ENCODE measurements at regions of chr7 and their contacts with region 1.

Region 1: GRCh38 chr7:12695965-12696364 is 8.5 kb downstream of the ARL4A start:
- DNase-seq: peak; percentile 68
- H3K4me3 Mint-ChIP-seq: no peak overlapping the region
- H3K27ac Mint-ChIP-seq: peak overlapping the region; percentile 79
- H3K4me1 Mint-ChIP-seq: peaks cover 27% of the 10 kb centered on the region
- H3K27me3 Mint-ChIP-seq: no peaks in the 10 kb centered on the region
- CTCF ChIP-seq: no peak

Region 2: DNA sequence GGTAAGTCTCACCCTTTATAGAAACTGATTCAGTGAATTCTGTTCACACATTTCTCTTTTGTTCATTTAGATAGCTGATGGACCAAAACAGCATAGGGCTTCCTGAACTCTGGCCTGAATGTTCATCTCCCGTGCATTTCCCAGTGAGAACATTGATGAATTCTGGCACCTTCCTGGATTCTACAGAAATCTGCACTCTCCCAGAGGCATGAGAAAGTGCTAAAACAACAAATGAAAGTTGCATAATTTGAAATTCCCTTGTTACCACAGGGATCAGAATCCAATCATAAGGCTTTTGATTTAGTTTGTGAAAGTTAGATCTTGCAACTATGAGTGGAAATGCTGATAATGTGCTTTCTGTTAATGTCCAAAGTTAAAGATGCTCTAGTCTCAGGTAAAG is 155.1 kb before region 1 on chr7:
- CTCF ChIA-PET with region 1: no interaction called
- POLR2A ChIA-PET with region 1: no interaction called
- intact Hi-C with region 1: no loop called
- DNase-seq: peak; percentile 30
- H3K4me3 Mint-ChIP-seq: no peak overlapping the region
- H3K27ac Mint-ChIP-seq: no peak overlapping the region
- H3K4me1 Mint-ChIP-seq: peaks cover 5% of the 10 kb centered on the region
- H3K27me3 Mint-ChIP-seq: no peaks in the 10 kb centered on the region
- CTCF ChIP-seq: no peak

Region 3: DNA sequence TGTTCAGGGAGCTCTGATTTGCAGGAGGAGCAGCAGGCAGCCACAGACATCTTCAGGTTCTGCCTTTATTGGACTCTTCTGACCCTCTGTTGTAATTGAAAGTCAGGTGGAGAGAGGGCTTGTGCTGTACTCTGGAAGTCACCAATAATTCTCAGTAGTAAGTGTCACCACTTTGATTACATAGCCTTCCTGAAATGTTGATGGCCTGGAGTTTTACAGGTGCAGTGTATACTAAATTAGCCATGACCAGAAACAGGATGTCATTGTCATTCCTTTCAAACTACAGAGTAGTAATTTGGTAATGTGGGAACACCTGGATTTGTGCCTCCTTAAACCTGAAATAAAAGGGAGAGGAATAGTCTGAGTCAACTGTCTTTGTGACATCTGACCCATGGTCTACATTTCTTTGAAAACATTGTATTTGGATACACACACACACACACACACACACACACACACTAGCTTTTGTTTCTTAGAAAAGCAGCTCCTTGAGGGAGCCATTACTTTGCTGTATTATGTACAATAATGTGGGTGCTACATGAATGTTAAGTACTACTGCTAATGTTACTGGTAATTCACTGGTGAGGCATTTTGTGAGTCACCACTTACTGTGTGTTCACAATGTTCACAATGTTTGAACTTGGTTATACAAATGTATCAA is 11.0 kb after region 1 on chr7:
- CTCF ChIA-PET with region 1: interaction called, 7 read pairs
- POLR2A ChIA-PET with region 1: interaction called, 159 read pairs
- intact Hi-C with region 1: no loop called
- DNase-seq: peak; percentile 55
- H3K4me3 Mint-ChIP-seq: peak overlapping the region; percentile 0
- H3K27ac Mint-ChIP-seq: peak overlapping the region; percentile 82
- H3K4me1 Mint-ChIP-seq: peaks cover 30% of the 10 kb centered on the region
- H3K27me3 Mint-ChIP-seq: no peaks in the 10 kb centered on the region
- CTCF ChIP-seq: no peak

Region 4: DNA sequence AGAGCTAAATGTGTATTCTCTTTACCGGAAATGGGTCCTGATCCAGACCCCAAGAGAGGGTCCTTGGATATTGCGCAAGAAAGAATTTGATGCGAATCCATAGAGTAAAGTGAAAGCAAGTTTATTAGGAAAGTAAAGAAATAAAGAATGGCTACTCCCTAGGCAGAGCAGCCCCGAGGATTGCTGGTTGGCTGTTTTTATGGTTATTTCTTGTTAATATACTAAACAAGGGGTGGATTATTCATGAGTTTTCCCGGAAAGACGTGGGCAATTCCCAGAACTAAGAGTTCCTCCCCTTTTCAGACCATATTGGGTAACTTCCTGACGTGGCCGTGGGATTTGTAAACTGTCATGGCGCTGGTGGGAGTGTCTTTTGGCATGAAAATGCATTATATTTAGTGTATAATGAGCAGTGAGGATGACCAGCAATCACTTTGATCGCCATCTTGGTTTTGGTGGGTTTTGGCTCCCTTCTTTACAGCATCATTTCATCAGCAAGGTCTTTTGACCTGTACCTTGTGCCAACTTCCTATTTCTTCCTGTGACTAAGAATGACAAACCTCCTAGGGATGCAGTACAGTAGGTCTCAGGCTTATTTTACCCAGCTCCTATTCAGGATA is 51.8 kb after region 1 on chr7:
- CTCF ChIA-PET with region 1: no interaction called
- POLR2A ChIA-PET with region 1: no interaction called
- intact Hi-C with region 1: no loop called
- DNase-seq: peak; percentile 9
- H3K4me3 Mint-ChIP-seq: no peak overlapping the region
- H3K27ac Mint-ChIP-seq: no peak overlapping the region
- H3K4me1 Mint-ChIP-seq: no peaks in the 10 kb centered on the region
- H3K27me3 Mint-ChIP-seq: no peaks in the 10 kb centered on the region
- CTCF ChIP-seq: no peak

Region 5: DNA sequence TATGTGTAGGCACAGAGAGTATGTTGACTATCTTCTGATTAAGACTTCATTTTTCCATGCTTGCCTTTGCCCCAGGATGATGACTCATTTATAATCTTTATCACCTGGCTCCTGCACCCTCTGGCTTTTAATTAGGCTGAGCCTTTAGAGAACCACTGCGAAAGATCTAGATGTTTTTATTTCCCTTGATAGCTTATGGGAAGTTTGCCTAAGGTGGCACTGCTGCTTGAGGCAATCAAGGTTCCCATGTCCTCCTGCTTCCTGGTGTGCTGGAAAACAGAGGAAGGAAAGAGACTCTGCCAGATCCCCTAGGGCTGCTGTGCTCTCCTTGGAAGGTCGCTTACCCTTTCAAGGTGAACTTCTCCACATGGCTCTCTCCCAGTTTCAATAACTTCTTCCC is 106.1 kb after region 1 on chr7:
- CTCF ChIA-PET with region 1: no interaction called
- POLR2A ChIA-PET with region 1: interaction called, 3 read pairs
- intact Hi-C with region 1: loop called (anchors 10 kb)
- DNase-seq: peak; percentile 37
- H3K4me3 Mint-ChIP-seq: no peak overlapping the region
- H3K27ac Mint-ChIP-seq: peak overlapping the region; percentile 68
- H3K4me1 Mint-ChIP-seq: peaks cover 36% of the 10 kb centered on the region
- H3K27me3 Mint-ChIP-seq: no peaks in the 10 kb centered on the region
- CTCF ChIP-seq: no peak